Activated naive CD4-positive, alpha-beta T cell treated with anti-CD3 and anti-CD28 coated beads for 36 hours (primary cell): ENCODE measurements at regions of chr3 and their contacts with region 1.

Region 1: DNA sequence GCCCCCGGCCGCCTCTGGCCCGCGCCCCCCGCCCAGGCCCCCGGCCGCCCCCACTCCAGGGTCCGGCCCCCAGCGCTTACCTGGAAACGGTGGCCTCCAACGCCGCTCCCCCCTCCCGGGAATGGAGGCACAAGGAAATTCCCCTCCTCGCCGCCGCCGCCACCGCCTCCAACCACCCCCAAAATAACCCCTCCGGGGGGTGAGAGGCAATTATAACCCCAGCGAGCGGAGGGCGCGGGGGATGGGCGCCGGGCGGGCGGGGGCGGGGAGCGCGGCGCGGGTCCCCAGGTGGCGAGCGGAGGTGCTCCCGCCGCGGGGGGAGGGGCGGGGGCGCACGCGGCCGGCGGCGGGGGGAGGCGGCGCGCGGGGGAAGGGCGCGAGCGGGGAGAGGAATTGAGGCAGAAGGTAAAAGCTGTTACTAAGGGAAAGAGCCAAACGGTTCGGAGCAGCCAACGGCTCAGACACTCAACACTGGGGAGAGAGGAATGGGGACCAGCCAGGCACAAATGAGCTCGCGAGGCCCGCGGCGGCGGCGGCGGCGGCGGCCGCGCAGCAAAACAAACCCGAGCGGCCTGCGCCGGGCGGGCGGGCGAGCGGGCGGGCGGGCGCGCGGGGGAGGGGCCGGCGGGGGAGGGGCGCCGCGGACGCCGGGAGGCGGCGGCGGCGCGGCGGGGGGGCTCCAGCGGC is at the start of gene TBL1XR1:
- DNase-seq: peak; percentile 84
- H3K4me3 Mint-ChIP-seq: peak within 1 kb of the TSS; percentile 96
- H3K27ac Mint-ChIP-seq: peak within 1 kb of the TSS; percentile 99
- H3K4me1 Mint-ChIP-seq: peaks cover 62% of the 10 kb centered on the region
- H3K27me3 Mint-ChIP-seq: no peaks in the 10 kb centered on the region
- total RNA-seq, gene TBL1XR1: 149 to 162 TPM

Region 2: GRCh38 chr3:177057768-177058167 is 139.4 kb before region 1 on chr3:
- CTCF ChIA-PET with region 1: interaction called, 3 read pairs
- intact Hi-C with region 1: loop called (anchors 1 kb)
- DNase-seq: peak; percentile 84
- H3K4me3 Mint-ChIP-seq: no peak overlapping the region
- H3K27ac Mint-ChIP-seq: no peak overlapping the region
- H3K4me1 Mint-ChIP-seq: peaks cover 32% of the 10 kb centered on the region
- H3K27me3 Mint-ChIP-seq: no peaks in the 10 kb centered on the region

Region 3: GRCh38 chr3:177150970-177151627 is 46.1 kb before region 1 on chr3:
- CTCF ChIA-PET with region 1: interaction called, 3 read pairs
- intact Hi-C with region 1: loop called (anchors 2 kb)
- DNase-seq: peak; percentile 38
- H3K4me3 Mint-ChIP-seq: no peak overlapping the region
- H3K27ac Mint-ChIP-seq: no peak overlapping the region
- H3K4me1 Mint-ChIP-seq: peaks cover 54% of the 10 kb centered on the region
- H3K27me3 Mint-ChIP-seq: no peaks in the 10 kb centered on the region

Region 4: DNA sequence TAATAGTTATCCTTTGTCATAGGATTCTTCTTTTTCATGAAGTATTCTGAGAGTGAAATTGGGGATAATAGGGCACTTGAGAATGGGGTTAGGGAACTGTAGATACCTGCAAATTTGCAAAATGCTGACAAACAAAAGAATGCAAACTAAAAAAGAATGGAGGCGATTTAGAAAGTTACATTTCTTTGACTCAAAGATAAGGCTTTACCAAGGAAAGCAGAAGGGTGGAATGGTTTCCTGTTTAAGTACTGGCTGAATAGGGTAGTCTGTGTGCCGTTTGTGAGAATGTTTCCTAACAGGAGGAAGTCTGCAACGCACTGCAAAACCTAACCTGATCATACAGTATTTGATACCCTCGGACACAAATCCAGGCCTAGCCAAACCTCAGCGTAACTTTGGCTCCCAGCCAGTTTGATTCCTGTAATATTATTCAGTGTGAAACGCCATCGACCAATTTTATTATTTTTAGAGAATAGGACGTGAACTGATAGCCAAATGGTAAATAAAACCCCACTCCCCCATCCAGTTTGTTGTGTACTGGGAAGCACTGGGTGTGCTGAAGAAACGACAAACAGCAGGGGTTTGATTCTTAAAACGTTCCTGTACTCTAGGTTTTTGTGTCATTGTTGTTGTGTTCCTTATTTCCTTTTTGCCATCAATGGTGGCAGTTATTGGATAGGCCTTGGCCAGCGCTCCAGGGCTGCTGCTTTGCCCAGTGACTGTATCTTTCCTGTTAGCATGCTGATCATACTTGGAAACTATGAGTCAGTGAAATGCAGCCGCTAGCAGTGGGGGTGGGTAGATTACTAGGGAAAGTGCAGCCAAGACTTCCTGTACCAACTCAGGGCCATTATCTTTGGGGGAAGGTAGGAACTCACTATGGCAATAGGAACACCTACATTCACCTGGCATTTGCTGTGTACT is 148.1 kb after region 1 on chr3:
- CTCF ChIA-PET with region 1: no interaction called
- intact Hi-C with region 1: loop called (anchors 1 kb)
- DNase-seq: peak; percentile 86
- H3K4me3 Mint-ChIP-seq: peak overlapping the region; percentile 34
- H3K27ac Mint-ChIP-seq: peak overlapping the region; percentile 87
- H3K4me1 Mint-ChIP-seq: peaks cover 42% of the 10 kb centered on the region
- H3K27me3 Mint-ChIP-seq: no peaks in the 10 kb centered on the region

Region 5: GRCh38 chr3:177426878-177427495 is 229.8 kb after region 1 on chr3:
- CTCF ChIA-PET with region 1: no interaction called
- intact Hi-C with region 1: loop called (anchors 1 kb)
- DNase-seq: peak; percentile 85
- H3K4me3 Mint-ChIP-seq: peak overlapping the region; percentile 40
- H3K27ac Mint-ChIP-seq: peak overlapping the region; percentile 92
- H3K4me1 Mint-ChIP-seq: peaks cover 29% of the 10 kb centered on the region
- H3K27me3 Mint-ChIP-seq: peaks cover 2% of the 10 kb centered on the region

Region 6: DNA sequence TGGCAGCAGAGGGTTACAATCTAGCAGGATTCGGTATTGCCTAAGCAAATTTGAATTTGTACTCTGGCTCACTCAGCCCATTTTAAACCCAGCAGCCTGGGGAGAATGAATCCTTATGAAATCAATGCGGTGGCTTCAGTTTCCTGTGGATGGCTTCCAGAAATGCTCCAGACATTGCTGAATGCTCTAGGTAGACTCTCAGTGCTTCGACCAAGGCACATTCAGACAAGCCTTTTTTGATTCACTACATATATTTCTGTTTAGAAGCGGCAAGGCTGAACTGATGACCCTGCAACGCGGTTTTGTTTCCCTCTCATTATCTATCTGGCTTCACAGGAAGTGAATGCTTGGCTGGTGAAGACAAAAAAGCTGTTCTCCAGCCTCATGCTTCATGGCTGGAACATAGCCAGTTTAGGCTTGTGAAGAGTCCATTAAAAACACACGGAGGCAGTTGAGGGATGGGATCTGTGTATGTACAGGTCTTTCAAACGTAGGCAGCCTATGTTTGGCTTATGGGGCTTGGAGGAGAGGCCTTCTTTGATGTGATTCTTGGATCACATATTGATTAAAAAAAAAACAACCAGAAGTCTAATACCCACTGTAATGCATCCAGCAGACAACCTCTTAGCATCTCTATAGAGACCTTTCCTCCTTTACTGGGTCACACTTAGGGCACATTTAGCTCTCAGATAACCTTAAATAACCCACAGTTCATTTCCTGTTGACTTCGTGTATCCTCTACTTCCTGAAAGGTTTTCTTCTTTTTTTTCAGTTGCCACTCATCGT is 400.3 kb after region 1 on chr3:
- CTCF ChIA-PET with region 1: no interaction called
- intact Hi-C with region 1: loop called (anchors 5 kb)
- DNase-seq: peak; percentile 51
- H3K4me3 Mint-ChIP-seq: peak overlapping the region; percentile 54
- H3K27ac Mint-ChIP-seq: peak overlapping the region; percentile 91
- H3K4me1 Mint-ChIP-seq: peaks cover 66% of the 10 kb centered on the region
- H3K27me3 Mint-ChIP-seq: no peaks in the 10 kb centered on the region